ENCODE measurements at regions of chr13 and their contacts with region 1.

Region 1: DNA sequence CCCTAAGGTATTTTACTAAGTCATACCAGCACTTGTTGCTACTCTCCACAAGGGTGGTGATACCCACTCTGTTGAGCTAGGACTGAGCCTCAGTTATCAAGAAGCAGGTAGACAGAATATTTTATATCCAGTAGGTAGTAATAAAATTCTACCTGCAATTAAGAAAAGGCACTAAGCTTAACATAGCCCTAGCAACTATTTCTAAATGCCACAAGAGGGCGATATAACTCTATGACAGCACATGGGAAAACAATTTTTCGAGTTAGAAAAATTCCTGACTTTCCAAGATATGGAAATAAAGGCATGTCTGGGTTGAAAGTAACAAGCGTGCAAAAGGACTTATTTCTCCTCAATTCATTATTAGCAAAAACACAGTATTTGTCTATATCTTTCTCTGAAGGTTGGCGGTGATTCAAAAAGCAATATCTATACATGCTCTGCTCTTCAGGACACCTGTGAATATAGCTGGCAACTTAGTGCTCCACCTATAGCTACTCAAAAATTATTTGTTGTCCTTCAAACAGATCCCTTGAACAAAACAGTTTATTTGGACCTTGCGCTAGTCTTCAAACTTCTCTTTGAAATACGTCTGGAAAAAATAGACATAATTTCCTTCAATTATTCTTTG is 14.7 kb downstream of the CCDC169 start:
- DNase-seq: peak; percentile 2
- ATAC-seq: peak; percentile 42; the same call in 1 of the 2 replicates
- H3K4me3 ChIP-seq: no peak overlapping the region
- H3K27ac ChIP-seq: no peak overlapping the region
- H3K4me1 ChIP-seq: no peaks in the 10 kb centered on the region
- H3K27me3 ChIP-seq: no peaks in the 10 kb centered on the region
- CTCF ChIP-seq: peak in 2 of 3 experiments; percentile 60 to 71; a peak in 4 of 6 replicates
- POLR2A ChIP-seq: no peak
- RAD21 ChIP-seq: peak; percentile 52

Region 2: DNA sequence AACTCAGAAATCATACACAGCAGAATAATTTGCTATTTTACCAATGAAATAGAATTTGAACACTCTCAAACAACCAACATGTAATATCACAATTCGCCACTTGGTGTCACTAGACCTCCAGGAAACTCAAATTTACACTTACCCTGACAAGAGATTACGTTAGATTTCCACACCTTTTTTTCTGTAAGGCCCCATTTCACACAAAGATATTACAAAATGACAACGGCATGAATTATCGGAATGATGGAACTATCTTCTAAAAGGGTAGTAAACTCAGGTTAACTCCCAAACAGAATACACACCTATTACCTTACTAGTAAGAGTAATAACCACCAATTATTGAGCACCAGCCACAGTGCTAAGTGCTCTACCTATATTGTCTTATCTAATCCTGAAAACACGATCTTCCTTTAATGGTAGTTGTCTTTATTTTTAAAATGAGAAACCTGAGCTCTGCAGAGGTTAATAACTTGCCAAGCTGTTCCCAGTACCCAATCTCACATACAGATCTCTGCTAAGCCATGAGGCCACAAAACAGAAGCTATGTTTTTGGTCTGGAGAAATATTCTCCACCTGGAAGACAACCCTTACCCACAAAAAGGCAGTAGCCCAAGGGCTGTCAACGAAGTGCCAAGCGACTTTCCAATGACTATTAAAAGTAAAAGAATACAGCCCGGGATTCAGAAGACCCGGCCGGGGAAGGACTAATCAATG is 304.2 kb before region 1 on chr13:
- CTCF ChIA-PET with region 1: no interaction called
- POLR2A ChIA-PET with region 1: no interaction called
- RAD21 ChIA-PET with region 1: no interaction called
- intact Hi-C with region 1: loop called (anchors 5 kb)
- DNase-seq: peak; percentile 29
- ATAC-seq: no peak
- H3K4me3 ChIP-seq: no peak overlapping the region
- H3K27ac ChIP-seq: no peak overlapping the region
- H3K4me1 ChIP-seq: no peaks in the 10 kb centered on the region
- H3K27me3 ChIP-seq: no peaks in the 10 kb centered on the region
- CTCF ChIP-seq: peak; percentile 18 to 80 (median 57); a peak in 5 of 6 replicates
- POLR2A ChIP-seq: no peak
- RAD21 ChIP-seq: peak; percentile 62

Region 3: GRCh38 chr13:36224730-36225129 is 58.2 kb before region 1 on chr13:
- CTCF ChIA-PET with region 1: no interaction called
- POLR2A ChIA-PET with region 1: no interaction called
- RAD21 ChIA-PET with region 1: no interaction called
- intact Hi-C with region 1: no loop called
- DNase-seq: no peak
- ATAC-seq: no peak
- H3K4me3 ChIP-seq: no peak overlapping the region
- H3K27ac ChIP-seq: no peak overlapping the region
- H3K4me1 ChIP-seq: no peaks in the 10 kb centered on the region
- H3K27me3 ChIP-seq: no peaks in the 10 kb centered on the region
- CTCF ChIP-seq: no peak
- POLR2A ChIP-seq: no peak
- RAD21 ChIP-seq: no peak

Region 4: DNA sequence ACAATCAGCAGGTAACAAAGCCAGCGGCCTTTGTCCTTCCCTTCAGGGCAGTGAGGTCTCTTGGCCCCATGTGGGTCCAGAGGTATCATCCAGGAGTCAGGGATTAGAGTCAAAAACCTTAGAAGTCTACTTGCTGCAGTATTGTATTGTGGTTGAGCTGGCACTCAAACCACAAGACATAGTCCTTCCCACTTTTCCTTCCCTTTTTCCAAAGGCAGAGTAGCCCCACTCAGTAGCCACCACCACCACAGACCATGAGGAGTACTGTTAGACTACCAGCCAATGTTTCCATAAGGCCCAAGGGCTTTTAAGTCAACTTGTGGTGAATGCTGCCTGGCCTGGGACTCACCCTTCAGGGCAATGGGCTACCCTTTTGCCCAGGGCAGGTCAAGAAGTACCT is 122.2 kb after region 1 on chr13:
- CTCF ChIA-PET with region 1: no interaction called
- POLR2A ChIA-PET with region 1: no interaction called
- RAD21 ChIA-PET with region 1: no interaction called
- intact Hi-C with region 1: no loop called
- DNase-seq: no peak
- ATAC-seq: no peak
- H3K4me3 ChIP-seq: no peak overlapping the region
- H3K27ac ChIP-seq: no peak overlapping the region
- H3K4me1 ChIP-seq: no peaks in the 10 kb centered on the region
- H3K27me3 ChIP-seq: no peaks in the 10 kb centered on the region
- CTCF ChIP-seq: no peak
- POLR2A ChIP-seq: no peak
- RAD21 ChIP-seq: no peak

Region 5: GRCh38 chr13:36736119-36736726 is 453.3 kb after region 1 on chr13:
- CTCF ChIA-PET with region 1: interaction called, 19 read pairs
- POLR2A ChIA-PET with region 1: no interaction called
- RAD21 ChIA-PET with region 1: no interaction called
- intact Hi-C with region 1: loop called (anchors 2 kb)
- DNase-seq: peak; percentile 31
- ATAC-seq: peak; percentile 61; the same call in 1 of the 2 replicates
- H3K4me3 ChIP-seq: no peak overlapping the region
- H3K27ac ChIP-seq: no peak overlapping the region
- H3K4me1 ChIP-seq: no peaks in the 10 kb centered on the region
- H3K27me3 ChIP-seq: no peaks in the 10 kb centered on the region
- CTCF ChIP-seq: peak; percentile 23 to 78 (median 63); a peak in 4 of 6 replicates
- POLR2A ChIP-seq: no peak
- RAD21 ChIP-seq: peak; percentile 29; the same call in 1 of the 2 replicates

Region 6: DNA sequence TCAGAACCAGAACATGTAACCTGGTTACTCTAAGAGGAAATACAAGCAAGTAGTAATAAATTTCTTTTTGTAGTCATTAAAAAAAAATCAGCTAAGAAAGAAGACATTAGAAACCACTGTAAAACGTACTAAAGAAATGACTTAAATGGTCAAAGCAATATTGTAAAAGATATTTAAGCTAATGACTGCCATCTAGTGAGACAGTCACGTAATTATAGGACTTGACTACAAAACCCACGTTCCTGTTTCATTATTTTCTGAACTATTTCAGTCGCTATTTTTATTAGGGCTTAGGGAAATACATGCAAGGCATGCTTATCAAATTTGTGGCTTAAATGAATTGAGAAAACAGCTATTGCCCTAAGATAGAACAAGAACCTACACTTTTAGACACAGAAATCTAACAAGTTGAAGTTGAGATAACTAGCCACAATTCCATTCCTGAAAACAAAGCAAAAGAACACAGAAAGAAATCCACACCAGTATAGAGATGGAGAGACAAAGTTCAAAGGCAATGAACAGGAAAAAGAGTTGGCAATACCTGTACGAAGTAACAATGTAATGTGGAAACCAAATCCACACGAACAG is 698.3 kb after region 1 on chr13:
- CTCF ChIA-PET with region 1: interaction called, 3 read pairs
- POLR2A ChIA-PET with region 1: no interaction called
- RAD21 ChIA-PET with region 1: no interaction called
- intact Hi-C with region 1: loop called (anchors 2 kb)
- DNase-seq: no peak
- ATAC-seq: peak; percentile 54
- H3K4me3 ChIP-seq: no peak overlapping the region
- H3K27ac ChIP-seq: no peak overlapping the region
- H3K4me1 ChIP-seq: no peaks in the 10 kb centered on the region
- H3K27me3 ChIP-seq: no peaks in the 10 kb centered on the region
- CTCF ChIP-seq: peak; percentile 30 to 63 (median 37); a peak in 4 of 6 replicates
- POLR2A ChIP-seq: no peak
- RAD21 ChIP-seq: peak; percentile 51; the same call in 1 of the 2 replicates

Region 7: DNA sequence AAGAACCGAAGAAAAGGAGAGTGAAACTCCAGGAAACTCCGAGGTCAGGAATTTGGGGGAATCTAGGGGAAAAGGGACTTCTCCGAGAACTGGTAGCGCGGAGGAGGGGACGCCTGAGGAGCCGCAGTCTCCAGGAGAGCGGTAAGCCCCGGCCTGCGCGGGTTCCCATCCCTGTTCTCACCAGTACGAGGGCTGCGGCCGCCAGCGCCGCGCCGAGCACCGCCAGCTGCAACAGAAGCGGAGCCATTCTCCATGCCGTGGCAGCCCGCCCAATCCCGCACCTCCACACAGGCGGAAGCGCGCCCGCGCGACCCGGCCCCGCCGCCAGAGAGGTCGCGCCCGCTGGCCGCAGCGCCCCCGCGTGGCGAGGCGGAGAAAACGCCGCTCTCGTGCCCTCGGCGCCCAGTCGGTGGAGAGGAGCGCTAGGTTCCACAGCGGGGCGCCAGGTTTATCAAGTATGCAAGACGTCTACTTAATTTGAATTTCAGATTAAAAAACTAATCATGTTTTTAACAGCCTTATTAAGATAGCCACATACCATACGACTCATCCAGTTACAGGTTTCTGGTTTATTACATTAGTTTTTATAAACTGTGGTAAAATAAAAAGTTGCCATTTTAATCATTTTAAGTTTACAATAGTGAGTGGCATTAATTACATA is 716.3 kb after region 1 on chr13 and contains the start of gene ALG5:
- CTCF ChIA-PET with region 1: no interaction called
- POLR2A ChIA-PET with region 1: no interaction called
- RAD21 ChIA-PET with region 1: no interaction called
- intact Hi-C with region 1: loop called (anchors 5 kb)
- DNase-seq: peak; percentile 72
- ATAC-seq: peak; percentile 81
- H3K4me3 ChIP-seq: peak within 1 kb of the TSS; percentile 97
- H3K27ac ChIP-seq: peak within 1 kb of the TSS; percentile 99
- H3K4me1 ChIP-seq: peaks cover 10 to 17% of the 10 kb centered on the region in 2 experiments; a peak in 3 of 4 replicates
- H3K27me3 ChIP-seq: no peaks in the 10 kb centered on the region
- CTCF ChIP-seq: peak; percentile 53 to 90 (median 71); a peak in 5 of 6 replicates
- POLR2A ChIP-seq: peak; percentile 89
- RAD21 ChIP-seq: no peak
- total RNA-seq, gene ALG5: 32.2 TPM

Region 8: GRCh38 chr13:37068962-37069361 is 786.0 kb after region 1 on chr13:
- CTCF ChIA-PET with region 1: interaction called, 10 read pairs
- POLR2A ChIA-PET with region 1: no interaction called
- RAD21 ChIA-PET with region 1: no interaction called
- intact Hi-C with region 1: no loop called
- DNase-seq: peak; percentile 0
- ATAC-seq: peak; percentile 59; the same call in 1 of the 2 replicates
- H3K4me3 ChIP-seq: no peak overlapping the region
- H3K27ac ChIP-seq: no peak overlapping the region
- H3K4me1 ChIP-seq: no peaks in the 10 kb centered on the region
- H3K27me3 ChIP-seq: no peaks in the 10 kb centered on the region
- CTCF ChIP-seq: peak; percentile 13 to 38 (median 26); a peak in 4 of 6 replicates
- POLR2A ChIP-seq: no peak
- RAD21 ChIP-seq: peak; percentile 54